Mammary epithelial cell (primary cell): ENCODE measurements at regions of chr1 and their contacts with region 1.

Region 1: DNA sequence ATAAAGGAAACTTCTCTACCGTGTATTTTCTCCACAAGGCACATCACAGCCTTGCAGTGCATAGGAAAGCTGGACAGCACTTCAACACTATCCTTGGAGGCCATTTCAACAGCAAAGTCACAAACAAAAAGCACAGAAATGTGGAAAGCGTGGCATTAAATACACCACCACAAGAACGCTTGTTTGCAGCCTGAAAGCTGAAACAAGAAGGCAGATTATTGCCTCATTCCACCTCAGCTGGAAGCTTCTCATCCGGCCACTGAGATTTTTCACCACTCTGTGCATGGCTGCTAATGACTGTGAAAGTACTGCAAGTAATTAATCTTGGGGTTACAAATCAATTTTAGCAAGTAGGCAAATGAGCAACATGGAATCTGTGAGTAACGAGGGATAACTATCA is 50.9 kb upstream of the GALNT2 start:
- DNase-seq: no peak
- H3K4me3 ChIP-seq: no peak overlapping the region
- H3K27ac ChIP-seq: no peak overlapping the region
- H3K4me1 ChIP-seq: no peaks in the 10 kb centered on the region
- H3K27me3 ChIP-seq: no peaks in the 10 kb centered on the region
- CTCF ChIP-seq: no peak

Region 2: DNA sequence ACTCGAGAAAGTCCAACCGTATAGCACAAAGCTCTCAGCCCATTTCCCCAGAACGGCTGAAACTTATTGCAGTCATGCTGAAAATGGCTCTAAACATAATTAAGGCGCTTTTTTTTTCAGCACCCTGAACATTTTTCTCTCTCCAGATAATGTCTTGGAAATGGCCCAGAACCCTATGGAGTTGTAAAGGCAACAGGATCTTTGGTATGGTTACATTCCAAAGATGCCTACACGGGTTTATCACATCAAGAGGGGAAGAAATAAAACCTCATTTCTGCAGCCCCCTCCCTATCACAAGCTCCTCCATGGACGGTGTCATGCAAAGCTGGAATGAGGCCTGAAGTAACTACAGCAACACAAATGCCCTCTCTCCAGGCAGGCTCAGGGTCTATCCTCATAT is 75.5 kb before region 1 on chr1:
- CTCF ChIA-PET with region 1: no interaction called
- dilution Hi-C with region 1: loop called (anchors 5 kb)
- in situ Hi-C with region 1: no loop called
- intact Hi-C with region 1: no loop called
- DNase-seq: no peak
- H3K4me3 ChIP-seq: no peak overlapping the region
- H3K27ac ChIP-seq: no peak overlapping the region
- H3K4me1 ChIP-seq: no peaks in the 10 kb centered on the region
- H3K27me3 ChIP-seq: peaks cover 6% of the 10 kb centered on the region
- CTCF ChIP-seq: no peak